ENCODE measurements at regions of chr11 and their contacts with region 1.

Region 1: GRCh38 chr11:61429691-61430582 is at the starts of genes CPSF7 and SDHAF2:
- DNase-seq: peak; percentile 98
- H3K4me3 Mint-ChIP-seq: peak within 1 kb of the TSS; percentile 91
- H3K27ac Mint-ChIP-seq: peak within 1 kb of the TSS; percentile 97
- H3K4me1 Mint-ChIP-seq: peaks cover 61% of the 10 kb centered on the region
- H3K27me3 Mint-ChIP-seq: no peaks in the 10 kb centered on the region
- total RNA-seq, gene CPSF7: 141 and 148 TPM in 2 replicates
- total RNA-seq, gene SDHAF2: 49.5 and 58.1 TPM in 2 replicates

Region 2: GRCh38 chr11:60841797-60842667 is 587.9 kb before region 1 on chr11 and contains the start of gene CCDC86:
- intact Hi-C with region 1: loop called (anchors 2 kb)
- DNase-seq: peak; percentile 98
- H3K4me3 Mint-ChIP-seq: peak within 1 kb of the TSS; percentile 91
- H3K27ac Mint-ChIP-seq: peak within 1 kb of the TSS; percentile 83
- H3K4me1 Mint-ChIP-seq: peaks cover 46% of the 10 kb centered on the region
- H3K27me3 Mint-ChIP-seq: peaks cover 1% of the 10 kb centered on the region
- total RNA-seq, gene CCDC86: 88.2 and 92.2 TPM in 2 replicates

Region 3: DNA sequence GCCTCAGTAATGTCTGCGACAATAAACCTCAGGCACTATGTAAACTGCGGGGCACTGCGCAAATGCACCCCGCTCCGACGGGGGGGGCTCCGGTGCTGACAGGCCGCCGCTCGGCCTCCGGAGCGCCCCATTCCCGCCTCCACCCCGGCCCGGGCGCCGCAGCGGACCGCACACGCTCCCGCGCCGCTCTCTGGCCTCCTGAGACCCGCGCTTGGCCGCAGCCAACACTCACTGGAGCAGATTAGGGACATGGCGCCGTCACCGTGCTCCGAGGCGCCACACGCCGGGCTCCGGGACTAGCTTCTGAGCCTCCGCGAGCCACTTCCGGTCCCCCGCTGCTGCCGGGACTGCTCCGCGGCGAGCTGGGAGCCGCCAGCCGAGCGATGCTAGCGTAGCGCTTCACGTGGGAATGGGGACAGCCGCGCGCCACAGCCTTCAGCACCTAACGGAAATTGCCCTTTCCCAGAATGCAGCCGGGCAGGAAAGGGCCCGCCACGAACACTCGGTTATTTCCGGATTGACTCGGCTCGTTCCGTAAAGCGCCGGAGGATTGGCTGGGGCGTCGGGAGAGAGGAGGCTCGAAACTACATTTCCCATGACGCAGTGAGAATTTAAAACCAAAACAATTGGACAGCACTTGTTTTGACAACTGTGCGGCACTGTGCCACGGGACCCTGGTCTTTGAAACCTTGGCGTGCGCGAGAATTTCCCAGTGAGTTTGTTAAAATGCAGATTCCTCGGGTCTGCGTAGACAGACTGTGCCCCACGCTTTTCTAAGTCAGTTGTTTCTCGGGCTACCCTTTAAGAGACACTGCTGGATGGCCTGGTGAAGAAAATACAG is 523.6 kb before region 1 on chr11 and contains the start of gene PRPF19:
- intact Hi-C with region 1: loop called (anchors 1 kb)
- DNase-seq: peak; percentile 99
- H3K4me3 Mint-ChIP-seq: peak within 1 kb of the TSS; percentile 90
- H3K27ac Mint-ChIP-seq: peak within 1 kb of the TSS; percentile 90
- H3K4me1 Mint-ChIP-seq: peaks cover 38% of the 10 kb centered on the region
- H3K27me3 Mint-ChIP-seq: peaks cover 15% of the 10 kb centered on the region
- total RNA-seq, gene PRPF19: 221 and 222 TPM in 2 replicates

Region 4: DNA sequence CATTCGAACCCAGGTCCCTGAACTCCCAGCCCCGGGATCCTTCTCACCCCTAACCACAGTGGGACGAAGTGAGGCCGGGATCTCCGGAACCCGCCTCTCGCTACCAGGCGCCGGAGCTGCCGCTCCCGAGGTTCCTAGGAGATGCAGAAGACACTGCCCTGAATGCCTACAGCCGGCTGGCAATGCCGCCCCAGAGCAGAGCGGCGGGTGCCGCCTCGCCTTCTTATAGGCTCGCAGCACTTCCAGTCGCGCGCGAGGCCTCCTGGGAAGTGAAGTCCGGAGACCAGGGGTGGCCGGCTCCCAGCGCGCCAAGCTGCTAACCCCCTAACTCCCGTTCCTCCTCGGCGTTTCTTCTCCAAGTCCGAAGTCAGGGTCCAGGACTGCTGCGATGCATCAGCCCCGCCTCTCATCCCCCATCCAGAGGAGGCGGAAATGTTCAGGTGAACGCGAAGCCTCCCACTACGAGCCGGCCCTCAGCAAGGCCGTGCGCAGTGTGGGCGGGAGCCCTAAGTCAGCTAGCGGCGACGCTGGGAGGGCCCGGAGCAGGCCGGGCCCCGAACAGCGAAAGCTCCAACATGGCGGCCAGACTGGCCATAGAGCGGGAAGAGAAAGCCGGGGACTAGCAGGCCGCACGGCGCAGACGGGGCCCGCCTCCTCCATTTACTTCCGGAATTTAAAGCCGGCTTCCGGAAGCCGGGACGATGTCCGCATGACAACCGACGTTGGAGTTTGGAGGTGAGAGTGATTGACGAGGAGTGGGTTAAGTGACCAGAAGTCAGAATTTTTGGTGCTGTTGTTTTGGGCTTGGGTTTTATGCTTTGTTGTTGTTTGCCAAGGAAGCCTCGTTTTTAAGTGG is 68.0 kb before region 1 on chr11 and contains the starts of genes CYB561A3 and TMEM138:
- intact Hi-C with region 1: loop called (anchors 1 kb)
- DNase-seq: peak; percentile 90
- H3K4me3 Mint-ChIP-seq: peak within 1 kb of the TSS; percentile 98
- H3K27ac Mint-ChIP-seq: peak within 1 kb of the TSS; percentile 95
- H3K4me1 Mint-ChIP-seq: peaks cover 45% of the 10 kb centered on the region
- H3K27me3 Mint-ChIP-seq: no peaks in the 10 kb centered on the region
- total RNA-seq, gene CYB561A3: 38.1 and 42.3 TPM in 2 replicates
- total RNA-seq, gene TMEM138: 68.4 and 71.7 TPM in 2 replicates

Region 5: GRCh38 chr11:61392981-61393595 is 36.8 kb before region 1 on chr11:
- intact Hi-C with region 1: loop called (anchors 2 kb)
- DNase-seq: no peak
- H3K4me3 Mint-ChIP-seq: peak overlapping the region; percentile 88
- H3K27ac Mint-ChIP-seq: peak overlapping the region; percentile 89
- H3K4me1 Mint-ChIP-seq: peaks cover 26% of the 10 kb centered on the region
- H3K27me3 Mint-ChIP-seq: no peaks in the 10 kb centered on the region

Region 6: DNA sequence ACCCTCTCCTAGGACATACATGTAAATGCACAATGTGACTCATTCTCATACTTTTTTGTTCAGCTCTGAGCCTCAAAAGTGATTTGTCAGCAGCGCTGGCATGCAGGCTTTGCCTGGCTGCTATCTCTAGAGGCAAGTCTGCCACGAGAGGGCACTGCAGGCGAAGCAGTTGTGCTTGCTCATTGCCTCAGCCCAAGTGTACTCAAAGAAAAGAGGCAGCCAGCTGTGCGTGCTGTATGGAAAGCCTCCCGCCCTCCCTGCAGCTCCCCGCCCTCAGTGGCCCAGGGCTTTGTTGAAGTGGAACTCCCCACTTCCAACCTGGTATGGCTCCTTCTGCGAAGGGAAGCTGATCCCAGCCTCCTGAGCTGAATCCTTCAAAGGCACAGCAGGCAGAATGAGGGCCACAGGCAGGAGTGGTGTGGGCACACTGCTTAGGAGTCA is 16.3 kb after region 1 on chr11:
- intact Hi-C with region 1: loop called (anchors 1 kb)
- DNase-seq: peak; percentile 71
- H3K4me3 Mint-ChIP-seq: no peak overlapping the region
- H3K27ac Mint-ChIP-seq: no peak overlapping the region
- H3K4me1 Mint-ChIP-seq: peaks cover 34% of the 10 kb centered on the region
- H3K27me3 Mint-ChIP-seq: no peaks in the 10 kb centered on the region